Mammary epithelial cell (primary cell): ENCODE measurements at regions of chr19 and their contacts with region 1.

Region 1: GRCh38 chr19:8965887-8966286 is 44.3 kb downstream of the MUC16 start:
- DNase-seq: no peak
- H3K4me3 ChIP-seq: no peak overlapping the region
- H3K27ac ChIP-seq: no peak overlapping the region
- H3K4me1 ChIP-seq: no peaks in the 10 kb centered on the region
- H3K27me3 ChIP-seq: no peaks in the 10 kb centered on the region
- CTCF ChIP-seq: no peak

Region 2: GRCh38 chr19:8884416-8884815 is 81.5 kb before region 1 on chr19:
- CTCF ChIA-PET with region 1: no interaction called
- dilution Hi-C with region 1: no loop called
- in situ Hi-C with region 1: no loop called
- intact Hi-C with region 1: no loop called
- DNase-seq: no peak
- H3K4me3 ChIP-seq: no peak overlapping the region
- H3K27ac ChIP-seq: no peak overlapping the region
- H3K4me1 ChIP-seq: no peaks in the 10 kb centered on the region
- H3K27me3 ChIP-seq: no peaks in the 10 kb centered on the region
- CTCF ChIP-seq: no peak

Region 3: DNA sequence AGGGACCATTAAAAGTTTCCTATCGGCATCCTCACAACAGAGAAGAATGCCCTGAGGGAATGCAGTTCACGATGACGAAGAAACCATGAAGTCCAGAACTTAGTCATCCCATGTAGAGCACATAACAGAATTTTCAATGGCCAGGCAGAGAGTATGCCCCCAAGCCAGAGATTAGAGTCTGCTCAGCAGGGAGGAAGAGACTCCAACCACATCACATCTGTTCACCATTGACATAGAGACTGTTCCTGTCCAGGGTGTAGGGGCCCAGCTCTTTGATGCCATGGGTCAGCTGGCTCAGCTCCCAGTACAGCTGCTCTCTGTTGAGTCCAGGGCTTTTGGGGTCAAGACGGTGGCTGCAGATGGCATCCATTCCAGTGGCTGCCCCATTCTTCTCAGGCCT is 65.5 kb before region 1 on chr19:
- CTCF ChIA-PET with region 1: no interaction called
- dilution Hi-C with region 1: loop called (anchors 5 kb)
- in situ Hi-C with region 1: no loop called
- intact Hi-C with region 1: no loop called
- DNase-seq: no peak
- H3K4me3 ChIP-seq: no peak overlapping the region
- H3K27ac ChIP-seq: no peak overlapping the region
- H3K4me1 ChIP-seq: no peaks in the 10 kb centered on the region
- H3K27me3 ChIP-seq: no peaks in the 10 kb centered on the region
- CTCF ChIP-seq: no peak

Region 4: DNA sequence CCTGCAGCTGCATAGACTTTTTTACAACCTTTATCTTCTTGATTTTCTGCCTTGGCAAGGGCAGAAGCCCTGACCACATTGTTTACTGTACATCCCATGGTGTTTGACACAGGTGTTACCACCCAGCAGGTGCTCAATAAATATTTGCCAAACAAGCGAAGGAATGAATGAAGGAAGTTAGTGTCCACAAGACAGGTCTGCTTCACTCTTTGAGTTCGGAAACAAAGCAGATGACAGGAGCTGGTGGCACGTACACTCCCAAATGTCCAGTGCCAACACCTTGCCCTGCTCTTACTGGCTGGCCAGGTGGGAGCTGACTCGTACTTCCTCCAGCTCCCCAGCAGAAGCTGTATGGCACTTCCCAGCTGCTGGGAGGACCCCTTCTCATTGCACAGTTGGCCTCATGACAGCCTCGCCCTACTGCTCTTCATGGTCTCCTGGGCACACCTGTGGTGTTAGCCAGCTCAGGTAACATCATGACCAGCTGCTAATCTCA is 66.3 kb after region 1 on chr19:
- CTCF ChIA-PET with region 1: no interaction called
- dilution Hi-C with region 1: loop called (anchors 5 kb)
- in situ Hi-C with region 1: no loop called
- intact Hi-C with region 1: no loop called
- DNase-seq: no peak
- H3K4me3 ChIP-seq: no peak overlapping the region
- H3K27ac ChIP-seq: no peak overlapping the region
- H3K4me1 ChIP-seq: no peaks in the 10 kb centered on the region
- H3K27me3 ChIP-seq: no peaks in the 10 kb centered on the region
- CTCF ChIP-seq: no peak